ENCODE measurements at regions of chr17 and their contacts with region 1.

Region 1: GRCh38 chr17:81621494-81622130 is 15.3 kb downstream of the NPLOC4 start:
- DNase-seq: no peak
- H3K4me3 ChIP-seq: no peak overlapping the region
- H3K27ac ChIP-seq: no peak overlapping the region
- H3K4me1 ChIP-seq: no peaks in the 10 kb centered on the region
- H3K27me3 ChIP-seq: no peaks in the 10 kb centered on the region
- CTCF ChIP-seq: no peak

Region 2: GRCh38 chr17:81566461-81567126 is 55.0 kb before region 1 on chr17:
- CTCF ChIA-PET with region 1: no interaction called
- dilution Hi-C with region 1: loop called (anchors 5 kb)
- in situ Hi-C with region 1: no loop called
- intact Hi-C with region 1: no loop called
- DNase-seq: peak; percentile 79
- H3K4me3 ChIP-seq: peak overlapping the region in 2 of 3 experiments; percentile 10 to 12
- H3K27ac ChIP-seq: peak overlapping the region; percentile 8
- H3K4me1 ChIP-seq: peaks cover 33% of the 10 kb centered on the region
- H3K27me3 ChIP-seq: no peaks in the 10 kb centered on the region
- CTCF ChIP-seq: no peak

Region 3: GRCh38 chr17:81672504-81672903 is 50.9 kb after region 1 on chr17:
- CTCF ChIA-PET with region 1: no interaction called
- dilution Hi-C with region 1: loop called (anchors 5 kb)
- in situ Hi-C with region 1: no loop called
- intact Hi-C with region 1: no loop called
- DNase-seq: no peak
- H3K4me3 ChIP-seq: no peak overlapping the region
- H3K27ac ChIP-seq: no peak overlapping the region
- H3K4me1 ChIP-seq: peaks cover 16% of the 10 kb centered on the region
- H3K27me3 ChIP-seq: no peaks in the 10 kb centered on the region
- CTCF ChIP-seq: no peak